ENCODE measurements at regions of chr1 and their contacts with region 1.

Region 1: DNA sequence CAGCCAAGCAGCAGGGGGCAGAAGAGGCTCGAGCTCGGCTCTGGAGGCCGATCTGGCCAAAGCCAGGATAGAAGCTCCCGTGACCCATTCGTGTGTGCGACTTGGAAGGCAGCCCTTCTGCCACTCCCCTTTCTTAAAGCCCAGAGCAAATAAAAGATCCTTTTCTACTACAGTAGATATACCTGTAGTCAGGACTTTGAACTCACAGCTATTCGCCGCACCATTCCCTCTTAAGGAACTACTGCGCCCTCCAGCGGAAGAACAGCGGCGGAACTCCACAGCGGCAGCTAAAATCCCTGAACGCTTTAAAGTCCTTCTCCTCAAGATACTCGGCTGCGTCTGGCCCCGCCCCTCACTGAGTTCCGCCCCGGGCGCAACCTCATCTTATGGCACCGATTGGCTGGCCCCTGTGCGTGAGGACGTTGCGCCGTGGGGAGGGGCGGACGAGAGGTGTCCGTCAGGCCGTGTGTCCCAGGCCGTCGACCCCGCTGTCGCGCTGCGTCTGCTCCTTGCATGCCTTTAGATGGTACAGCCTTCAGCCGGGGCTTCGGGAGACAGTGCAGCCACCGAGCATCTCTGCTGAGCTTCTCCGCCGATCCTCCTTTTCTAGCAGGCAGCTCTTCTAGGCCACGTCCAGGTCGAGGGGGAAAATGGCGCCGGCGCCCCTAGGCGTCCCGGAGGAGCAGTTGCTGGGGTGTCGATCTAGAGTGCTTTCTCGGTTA is at the start of gene LRIG2:
- DNase-seq: peak; percentile 90 to 97 (median 96)
- ATAC-seq: peak; percentile 98
- H3K4me3 ChIP-seq: peak within 1 kb of the TSS; percentile 83
- H3K4me3 Mint-ChIP-seq: peak within 1 kb of the TSS; percentile 95 to 100 (median 98)
- H3K27ac ChIP-seq: peak within 1 kb of the TSS; percentile 82
- H3K27ac Mint-ChIP-seq: peak within 1 kb of the TSS; percentile 91 to 98 (median 93)
- H3K4me1 ChIP-seq: peaks cover 10 to 18% of the 10 kb centered on the region in 2 donors
- H3K4me1 Mint-ChIP-seq: peaks cover 18 to 42% (median 29%) of the 10 kb centered on the region in 7 donors
- H3K27me3 ChIP-seq: no peaks in the 10 kb centered on the region
- H3K27me3 Mint-ChIP-seq: no peaks in the 10 kb centered on the region
- total RNA-seq, gene LRIG2: 15.5 to 27.0 (median 20.2) TPM

Region 2: GRCh38 chr1:111988743-111989453 is 1084.0 kb before region 1 on chr1:
- CTCF ChIA-PET with region 1: no interaction called
- POLR2A ChIA-PET with region 1: no interaction called
- intact Hi-C with region 1: no loop called
- DNase-seq: no peak
- ATAC-seq: no peak
- H3K4me3 ChIP-seq: no peak overlapping the region
- H3K4me3 Mint-ChIP-seq: peak overlapping the region; percentile 16 to 80 (median 61)
- H3K27ac ChIP-seq: no peak overlapping the region
- H3K27ac Mint-ChIP-seq: no peak overlapping the region
- H3K4me1 ChIP-seq: no peaks in the 10 kb centered on the region
- H3K4me1 Mint-ChIP-seq: peaks cover 0 to 22% (median 8%) of the 10 kb centered on the region in 7 donors
- H3K27me3 ChIP-seq: peaks cover 0 to 4% of the 10 kb centered on the region in 2 donors
- H3K27me3 Mint-ChIP-seq: peaks cover 66 to 76% (median 69%) of the 10 kb centered on the region in 5 donors

Region 3: GRCh38 chr1:112501810-112502641 is 570.9 kb before region 1 on chr1:
- CTCF ChIA-PET with region 1: no interaction called
- POLR2A ChIA-PET with region 1: no interaction called
- intact Hi-C with region 1: loop called in 1 of 2 experiments (anchors 10 kb)
- DNase-seq: peak in 8 of 9 donors; percentile 28 to 66 (median 38)
- ATAC-seq: peak; percentile 78
- H3K4me3 ChIP-seq: peak overlapping the region; percentile 54
- H3K4me3 Mint-ChIP-seq: peak overlapping the region; percentile 43 to 81 (median 70)
- H3K27ac ChIP-seq: no peak overlapping the region
- H3K27ac Mint-ChIP-seq: no peak overlapping the region
- H3K4me1 ChIP-seq: no peaks in the 10 kb centered on the region
- H3K4me1 Mint-ChIP-seq: peaks cover under 1 to 8% (median 3%) of the 10 kb centered on the region in 7 donors
- H3K27me3 ChIP-seq: peaks cover 8 to 9% of the 10 kb centered on the region in 2 donors
- H3K27me3 Mint-ChIP-seq: peaks cover 66 to 74% (median 68%) of the 10 kb centered on the region in 5 donors

Region 4: DNA sequence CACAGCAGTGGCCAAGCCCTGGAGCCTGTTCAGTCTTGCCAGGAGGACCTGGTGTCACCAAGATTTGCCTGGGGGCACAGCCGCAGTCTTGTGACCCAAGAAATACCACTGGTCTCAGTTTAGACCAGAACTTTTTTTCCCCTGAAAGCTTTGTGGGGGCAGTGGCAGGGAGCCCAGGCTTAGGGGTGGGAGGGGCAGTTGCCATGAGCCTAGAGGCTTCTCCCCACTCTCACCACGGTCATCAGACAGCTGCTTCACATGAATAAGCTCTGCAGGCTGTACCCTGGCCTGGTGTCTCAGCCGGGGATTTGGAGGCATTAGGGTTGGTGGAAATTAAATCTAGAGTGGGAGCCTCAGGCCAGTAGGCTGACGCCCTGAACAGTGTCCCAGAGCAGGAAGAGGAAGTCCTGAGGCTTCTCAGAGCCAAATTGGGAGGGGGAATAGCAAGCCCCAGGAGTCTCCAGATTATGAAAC is 190.6 kb before region 1 on chr1:
- CTCF ChIA-PET with region 1: interaction called, 34 read pairs
- POLR2A ChIA-PET with region 1: no interaction called
- intact Hi-C with region 1: loop called (anchors 2 kb)
- DNase-seq: no peak
- ATAC-seq: peak; percentile 16
- H3K4me3 ChIP-seq: no peak overlapping the region
- H3K4me3 Mint-ChIP-seq: no peak overlapping the region
- H3K27ac ChIP-seq: no peak overlapping the region
- H3K27ac Mint-ChIP-seq: no peak overlapping the region
- H3K4me1 ChIP-seq: no peaks in the 10 kb centered on the region
- H3K4me1 Mint-ChIP-seq: peaks cover 0 to 3% (median 0%) of the 10 kb centered on the region in 7 donors
- H3K27me3 ChIP-seq: no peaks in the 10 kb centered on the region
- H3K27me3 Mint-ChIP-seq: peaks cover 0 to 24% (median 4%) of the 10 kb centered on the region in 5 donors

Region 5: GRCh38 chr1:112971006-112971405 is 101.9 kb before region 1 on chr1:
- CTCF ChIA-PET with region 1: no interaction called
- POLR2A ChIA-PET with region 1: no interaction called
- intact Hi-C with region 1: no loop called
- DNase-seq: no peak
- ATAC-seq: no peak
- H3K4me3 ChIP-seq: no peak overlapping the region
- H3K4me3 Mint-ChIP-seq: no peak overlapping the region
- H3K27ac ChIP-seq: no peak overlapping the region
- H3K27ac Mint-ChIP-seq: no peak overlapping the region
- H3K4me1 ChIP-seq: no peaks in the 10 kb centered on the region
- H3K4me1 Mint-ChIP-seq: peaks cover 0 to 11% (median 0%) of the 10 kb centered on the region in 7 donors
- H3K27me3 ChIP-seq: no peaks in the 10 kb centered on the region
- H3K27me3 Mint-ChIP-seq: no peaks in the 10 kb centered on the region

Region 6: DNA sequence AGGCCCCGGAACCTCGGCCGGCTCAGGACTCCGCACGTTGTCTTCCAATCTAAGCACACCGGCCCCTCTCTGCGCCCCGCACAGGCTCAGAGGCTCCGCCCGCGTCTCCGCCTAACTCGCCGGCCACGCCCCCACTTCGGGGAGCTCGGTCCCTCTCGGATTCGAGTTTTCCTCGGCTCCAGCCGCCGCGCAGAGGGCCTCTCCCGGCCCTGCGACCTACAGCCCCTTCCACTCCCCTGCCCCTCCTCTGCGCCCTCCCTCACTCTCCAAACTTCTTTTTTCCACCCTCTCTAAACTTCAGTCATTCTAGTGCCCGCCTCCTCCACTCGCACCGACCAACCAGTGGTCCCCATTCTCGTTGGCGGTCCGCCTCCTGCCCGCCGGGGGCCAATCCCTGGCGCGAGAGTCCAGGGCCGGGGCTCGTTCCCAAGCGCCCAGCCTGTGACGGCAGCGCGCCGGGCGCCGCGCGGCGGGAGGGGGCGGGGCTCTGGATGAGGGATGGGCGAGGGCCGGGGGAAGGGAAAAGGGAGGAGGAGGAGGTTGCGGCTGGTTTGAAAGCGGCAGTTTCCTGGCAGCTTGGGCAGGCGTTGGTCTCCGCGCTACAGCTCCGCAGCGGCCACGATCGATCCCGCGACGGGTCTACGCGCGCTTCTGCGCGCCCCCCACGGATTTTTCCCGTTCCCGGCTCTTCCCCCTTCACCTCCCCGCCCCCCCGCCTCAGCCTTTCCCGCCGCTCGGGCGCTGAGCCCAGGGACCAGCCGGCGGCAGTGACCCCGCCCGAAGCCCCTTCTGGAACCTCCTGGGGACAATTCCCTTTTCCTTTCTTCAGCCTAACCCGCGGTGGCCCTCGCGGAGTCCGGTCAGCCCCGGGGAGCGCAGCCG is 317.3 kb after region 1 on chr1 and contains the start of gene MAGI3:
- CTCF ChIA-PET with region 1: interaction called, 3 read pairs
- POLR2A ChIA-PET with region 1: interaction called, 3 read pairs
- intact Hi-C with region 1: loop called (anchors 2 kb)
- DNase-seq: peak; percentile 84 to 97 (median 91)
- ATAC-seq: peak; percentile 95
- H3K4me3 ChIP-seq: peak within 1 kb of the TSS; percentile 88
- H3K4me3 Mint-ChIP-seq: peak within 1 kb of the TSS; percentile 84 to 98 (median 94)
- H3K27ac ChIP-seq: peak within 1 kb of the TSS; percentile 71
- H3K27ac Mint-ChIP-seq: peak within 1 kb of the TSS; percentile 38 to 89 (median 85)
- H3K4me1 ChIP-seq: peaks cover 0 to 16% of the 10 kb centered on the region in 2 donors
- H3K4me1 Mint-ChIP-seq: peaks cover 22 to 31% (median 26%) of the 10 kb centered on the region in 7 donors
- H3K27me3 ChIP-seq: no peaks in the 10 kb centered on the region
- H3K27me3 Mint-ChIP-seq: peaks cover 0 to 42% (median 6%) of the 10 kb centered on the region in 5 donors
- total RNA-seq, gene MAGI3: 5.7 to 8.8 (median 7.2) TPM

Region 7: DNA sequence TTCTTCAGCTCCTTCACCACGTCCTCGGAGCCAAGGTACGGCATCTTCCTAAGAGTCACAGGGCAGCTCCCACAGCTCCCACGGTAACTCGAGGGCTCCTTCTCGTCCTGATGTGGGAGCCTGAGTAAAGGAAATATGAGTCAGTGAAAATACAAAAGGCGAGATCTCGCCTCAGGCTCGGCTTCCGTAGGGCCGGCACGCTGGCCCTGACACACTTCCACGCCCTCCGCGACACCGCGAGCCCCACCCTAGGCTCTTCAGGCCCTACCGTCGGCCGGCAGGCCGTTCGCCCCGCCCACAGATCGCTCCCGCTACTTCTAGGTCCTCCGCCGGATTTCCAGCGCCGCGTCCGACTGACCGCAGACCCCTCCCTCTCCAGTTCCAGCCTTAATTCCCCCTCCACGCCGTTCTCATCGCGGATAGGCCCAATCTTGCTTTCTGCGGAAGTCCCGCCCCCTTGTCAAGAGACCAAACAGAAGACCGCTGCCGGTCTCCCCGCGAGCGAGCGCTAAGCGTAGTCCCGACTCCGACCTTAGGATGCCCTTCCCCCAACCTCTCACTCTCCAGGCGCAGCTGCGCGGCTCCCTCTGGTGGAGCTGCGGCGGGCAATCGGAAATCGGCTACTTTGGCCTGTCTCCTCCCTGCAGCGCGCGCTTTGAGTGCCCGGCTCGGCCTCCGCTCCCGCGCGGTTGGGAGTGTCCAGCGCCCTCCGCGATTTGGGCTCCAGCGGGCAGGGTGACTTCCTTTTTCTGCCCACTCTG is 831.9 kb after region 1 on chr1 and contains the starts of genes AP4B1 and DCLRE1B:
- CTCF ChIA-PET with region 1: no interaction called
- POLR2A ChIA-PET with region 1: no interaction called
- intact Hi-C with region 1: loop called in 1 of 2 experiments (anchors 5 kb)
- DNase-seq: peak; percentile 88 to 98 (median 97)
- ATAC-seq: peak; percentile 96
- H3K4me3 ChIP-seq: peak within 1 kb of the TSS; percentile 82
- H3K4me3 Mint-ChIP-seq: peak within 1 kb of the TSS; percentile 92 to 100 (median 99)
- H3K27ac ChIP-seq: peak within 1 kb of the TSS; percentile 89
- H3K27ac Mint-ChIP-seq: peak within 1 kb of the TSS; percentile 96 to 100 (median 99)
- H3K4me1 ChIP-seq: peaks cover 15 to 21% of the 10 kb centered on the region in 2 donors
- H3K4me1 Mint-ChIP-seq: peaks cover 36 to 62% (median 54%) of the 10 kb centered on the region in 7 donors
- H3K27me3 ChIP-seq: no peaks in the 10 kb centered on the region
- H3K27me3 Mint-ChIP-seq: peaks cover 0 to 4% (median 0%) of the 10 kb centered on the region in 5 donors
- total RNA-seq, gene AP4B1: 50.8 to 75.4 (median 65.0) TPM
- total RNA-seq, gene DCLRE1B: 4.1 to 13.6 (median 6.9) TPM

Region 8: DNA sequence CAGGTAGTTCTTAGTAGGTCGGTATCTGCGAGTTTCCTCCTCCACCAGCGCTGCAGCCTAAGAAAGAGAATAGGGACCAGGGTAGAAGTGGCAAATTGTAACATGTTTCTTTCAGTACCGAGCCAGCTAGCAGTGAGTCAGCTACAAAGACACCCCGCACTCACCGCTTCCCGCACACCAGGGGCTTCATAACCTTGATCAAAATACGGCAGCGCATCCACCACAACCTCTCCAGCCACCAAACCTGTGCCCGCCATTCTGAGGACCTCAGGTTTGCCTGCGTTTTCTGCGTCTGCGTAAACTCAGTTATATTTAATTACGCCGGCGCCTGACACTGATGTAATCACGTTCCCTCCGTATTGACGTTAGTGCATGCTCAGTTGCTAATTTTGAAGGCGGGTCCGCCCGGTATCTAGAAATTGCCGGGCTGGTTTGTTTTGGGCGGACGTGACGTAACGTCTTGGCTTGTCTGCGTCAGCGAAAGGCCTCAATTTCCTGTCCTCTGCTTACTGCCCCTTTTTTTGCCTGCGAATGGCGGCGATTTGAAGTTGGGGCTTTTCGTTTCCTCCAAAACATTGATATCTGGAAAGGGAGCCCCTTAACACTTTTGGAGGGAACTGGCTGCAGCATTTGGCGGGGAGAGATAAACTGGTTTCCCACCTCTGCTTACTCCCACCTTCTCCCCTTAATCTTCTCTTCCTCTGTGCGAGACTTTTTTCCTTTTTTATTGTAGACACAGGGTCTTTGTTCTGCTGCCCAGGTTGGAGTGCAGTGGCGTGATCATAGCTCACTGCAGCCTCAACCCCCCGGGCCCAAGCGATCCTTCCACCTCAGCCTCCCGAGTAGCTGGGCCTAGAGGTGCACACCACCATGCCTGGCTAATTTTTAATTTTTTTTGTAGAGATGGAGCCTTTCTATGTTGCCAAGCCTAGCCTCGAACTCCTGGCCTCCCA is 1508.7 kb after region 1 on chr1 and contains the start of gene BCAS2:
- CTCF ChIA-PET with region 1: no interaction called
- POLR2A ChIA-PET with region 1: no interaction called
- intact Hi-C with region 1: loop called (anchors 2 to 5 kb)
- DNase-seq: peak; percentile 71 to 98 (median 97)
- ATAC-seq: peak; percentile 97
- H3K4me3 ChIP-seq: peak within 1 kb of the TSS; percentile 76
- H3K4me3 Mint-ChIP-seq: peak within 1 kb of the TSS; percentile 92 to 99 (median 98)
- H3K27ac ChIP-seq: peak within 1 kb of the TSS; percentile 93
- H3K27ac Mint-ChIP-seq: peak within 1 kb of the TSS; percentile 95 to 99 (median 98)
- H3K4me1 ChIP-seq: peaks cover 21 to 23% of the 10 kb centered on the region in 2 donors
- H3K4me1 Mint-ChIP-seq: peaks cover 14 to 55% (median 41%) of the 10 kb centered on the region in 7 donors
- H3K27me3 ChIP-seq: peaks cover 0 to 3% of the 10 kb centered on the region in 2 donors
- H3K27me3 Mint-ChIP-seq: peaks cover 0 to 4% (median 4%) of the 10 kb centered on the region in 5 donors
- total RNA-seq, gene BCAS2: 32.3 to 87.1 (median 46.0) TPM

Region 9: GRCh38 chr1:115062542-115063011 is 1989.7 kb after region 1 on chr1:
- CTCF ChIA-PET with region 1: no interaction called
- POLR2A ChIA-PET with region 1: no interaction called
- intact Hi-C with region 1: loop called in 1 of 2 experiments (anchors 2 kb)
- DNase-seq: peak; percentile 70 to 97 (median 97)
- ATAC-seq: peak; percentile 97
- H3K4me3 ChIP-seq: peak overlapping the region; percentile 36
- H3K4me3 Mint-ChIP-seq: peak overlapping the region; percentile 60 to 87 (median 78)
- H3K27ac ChIP-seq: peak overlapping the region; percentile 84
- H3K27ac Mint-ChIP-seq: peak overlapping the region; percentile 89 to 100 (median 99)
- H3K4me1 ChIP-seq: peaks cover 32% of the 10 kb centered on the region in 2 donors
- H3K4me1 Mint-ChIP-seq: peaks cover 36 to 59% (median 46%) of the 10 kb centered on the region in 7 donors
- H3K27me3 ChIP-seq: no peaks in the 10 kb centered on the region
- H3K27me3 Mint-ChIP-seq: peaks cover 0 to 6% (median 0%) of the 10 kb centered on the region in 5 donors